ENCODE measurements at regions of chr9 and their contacts with region 1.

Region 1: GRCh38 chr9:118170032-118170955 is 466.1 kb downstream of the TLR4 start:
- DNase-seq: peak; percentile 36
- ATAC-seq: peak; percentile 70 to 83

Region 2: DNA sequence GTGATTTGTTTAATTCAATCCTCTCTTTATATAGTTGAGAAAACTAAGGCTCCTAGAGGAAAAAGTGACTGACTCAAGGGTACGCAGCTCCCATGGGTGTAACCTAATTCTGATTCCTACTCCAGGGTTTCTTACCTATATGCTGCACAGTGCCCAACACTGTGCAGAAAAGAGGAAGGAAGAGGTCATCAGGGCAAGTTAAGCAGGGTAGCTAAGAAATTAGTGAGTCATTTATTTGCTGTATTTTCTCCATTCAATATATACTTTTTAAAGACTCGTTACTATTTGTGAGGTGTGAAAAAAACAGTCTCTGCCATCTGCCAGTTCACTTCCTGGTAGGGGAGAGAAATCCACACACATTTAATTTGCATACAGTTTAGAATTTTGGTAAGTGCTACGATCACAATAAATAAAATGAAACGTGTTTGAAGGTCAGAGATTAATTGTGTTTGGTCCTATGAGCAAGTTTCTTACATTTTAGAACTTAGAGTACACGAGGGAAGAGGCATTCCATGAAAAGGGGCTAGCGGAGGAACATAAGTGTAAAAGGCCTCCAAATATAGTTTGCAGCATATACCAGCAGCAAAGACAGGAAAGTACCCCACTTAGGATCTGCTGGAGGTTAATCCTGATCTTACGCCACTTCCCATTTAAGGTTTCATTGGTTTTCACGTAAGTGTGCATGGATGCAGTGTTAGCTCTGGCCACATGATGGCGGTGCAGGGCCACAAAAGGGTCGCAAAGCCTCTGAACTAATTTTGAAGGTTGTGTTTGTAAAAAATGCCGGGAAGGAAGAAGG is 526.0 kb before region 1 on chr9:
- intact Hi-C with region 1: loop called in 1 of 2 experiments (anchors 10 kb)
- DNase-seq: peak; percentile 72
- ATAC-seq: peak; percentile 81 to 82

Region 3: GRCh38 chr9:118522093-118523028 is 352.1 kb after region 1 on chr9:
- intact Hi-C with region 1: loop called in 1 of 2 experiments (anchors 10 kb)
- DNase-seq: peak; percentile 46
- ATAC-seq: peak; percentile 50 to 80

Region 4: GRCh38 chr9:118595719-118596305 is 425.5 kb after region 1 on chr9:
- intact Hi-C with region 1: loop called in 1 of 2 experiments (anchors 10 kb)
- DNase-seq: peak; percentile 25
- ATAC-seq: peak in 1 of 2 donors; percentile 53

Region 5: DNA sequence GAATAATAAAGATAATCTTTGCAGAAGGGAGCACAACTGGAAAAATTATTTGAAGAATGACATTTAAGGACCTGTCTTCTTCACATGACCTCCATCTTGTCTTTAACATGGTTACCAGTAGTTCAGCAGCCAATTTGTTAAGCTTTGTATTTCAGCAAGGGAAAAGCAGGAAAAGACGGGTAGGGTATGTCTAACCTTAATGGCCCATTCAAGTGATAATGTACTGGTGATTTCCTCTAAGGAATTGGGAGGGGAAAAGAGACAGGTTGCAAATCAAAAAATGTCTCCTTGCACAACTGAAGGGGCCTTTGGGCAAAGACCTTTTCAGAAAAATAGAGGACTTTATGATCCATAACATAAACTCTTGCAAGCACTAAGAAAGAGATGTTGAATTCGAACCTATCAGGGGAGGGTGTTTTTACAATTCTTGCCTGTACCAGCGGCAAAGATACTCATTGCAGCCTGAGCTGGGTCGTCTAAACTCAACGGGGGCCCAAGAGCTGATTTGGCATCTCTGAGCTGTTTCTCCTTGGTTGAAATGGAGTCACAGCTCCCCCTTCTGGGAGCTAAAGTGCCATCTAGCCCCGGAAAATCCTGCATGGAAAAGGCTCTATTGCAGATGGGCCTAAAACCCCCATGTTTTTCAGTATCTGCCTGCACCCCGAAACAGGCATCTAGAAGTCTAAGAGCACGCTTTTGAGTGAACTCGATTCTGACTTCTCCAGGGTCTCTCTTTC is 1195.2 kb after region 1 on chr9:
- intact Hi-C with region 1: loop called in 1 of 2 experiments (anchors 10 kb)
- DNase-seq: no peak
- ATAC-seq: no peak

Measured in left cardiac atrium (tissue), 4 donors.